Activated CD4-positive, alpha-beta memory T cell treated with anti-CD3 and anti-CD28 coated beads for 36 hours (primary cell): ENCODE measurements at regions of chr3 and their contacts with region 1.

Region 1: GRCh38 chr3:141412087-141412935 is 44.0 kb downstream of the ZBTB38 start:
- DNase-seq: peak; percentile 60
- H3K4me3 Mint-ChIP-seq: peak overlapping the region; percentile 70
- H3K27ac Mint-ChIP-seq: peak overlapping the region; percentile 92
- H3K4me1 Mint-ChIP-seq: peaks cover 87% of the 10 kb centered on the region
- H3K27me3 Mint-ChIP-seq: no peaks in the 10 kb centered on the region

Region 2: GRCh38 chr3:140910860-140911259 is 501.5 kb before region 1 on chr3:
- CTCF ChIA-PET with region 1: no interaction called
- POLR2A ChIA-PET with region 1: no interaction called
- intact Hi-C with region 1: no loop called
- DNase-seq: no peak
- H3K4me3 Mint-ChIP-seq: no peak overlapping the region
- H3K27ac Mint-ChIP-seq: no peak overlapping the region
- H3K4me1 Mint-ChIP-seq: no peaks in the 10 kb centered on the region
- H3K27me3 Mint-ChIP-seq: peaks cover 2% of the 10 kb centered on the region

Region 3: DNA sequence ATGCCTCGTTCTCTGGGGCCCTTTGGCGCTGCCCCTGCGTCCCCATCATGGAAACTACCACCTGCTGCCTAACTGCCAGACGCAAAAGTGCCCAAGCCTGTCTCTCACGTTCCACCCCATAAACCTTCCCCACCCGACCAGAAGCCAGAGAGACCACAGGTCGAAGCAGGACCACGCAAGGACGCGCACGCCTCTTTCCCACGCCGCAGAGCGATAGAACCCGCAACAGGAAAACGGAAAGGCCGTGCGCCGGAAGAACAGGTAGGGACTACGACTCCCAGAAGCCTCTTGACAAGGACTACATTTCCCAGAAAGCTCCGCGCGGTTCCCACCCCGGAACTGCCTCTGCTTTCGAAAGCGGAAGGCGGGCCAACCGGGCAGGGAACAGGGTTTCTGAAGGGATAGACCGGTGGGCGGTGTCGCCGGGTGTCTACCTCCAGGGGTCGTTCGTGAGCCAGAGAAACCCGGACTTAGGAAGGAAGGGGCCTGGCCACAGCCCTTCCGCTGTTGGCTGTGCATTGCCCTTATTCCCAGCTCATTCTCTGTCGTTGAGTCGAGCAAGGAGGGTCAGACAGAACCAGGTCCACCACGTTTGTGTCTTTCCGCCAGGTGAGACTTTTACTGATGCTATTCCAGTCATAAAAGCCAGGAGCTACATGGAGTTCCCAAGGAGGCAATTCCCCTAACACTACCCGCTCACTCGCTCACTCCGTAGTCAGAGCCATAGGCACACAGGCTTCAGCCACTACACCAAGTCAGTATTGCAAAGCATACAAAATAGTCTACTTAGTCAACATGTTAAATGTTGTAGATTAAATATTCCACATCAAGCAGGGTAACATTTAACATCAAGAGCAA is 100.6 kb before region 1 on chr3:
- CTCF ChIA-PET with region 1: interaction called, 10 read pairs
- POLR2A ChIA-PET with region 1: interaction called, 3 read pairs
- intact Hi-C with region 1: loop called (anchors 1 kb)
- DNase-seq: peak; percentile 100
- H3K4me3 Mint-ChIP-seq: peak overlapping the region; percentile 89
- H3K27ac Mint-ChIP-seq: peak overlapping the region; percentile 90
- H3K4me1 Mint-ChIP-seq: peaks cover 49% of the 10 kb centered on the region
- H3K27me3 Mint-ChIP-seq: no peaks in the 10 kb centered on the region

Region 4: GRCh38 chr3:141370065-141370533 is 42.2 kb before region 1 on chr3:
- CTCF ChIA-PET with region 1: interaction called, 5 read pairs
- POLR2A ChIA-PET with region 1: interaction called, 31 read pairs
- intact Hi-C with region 1: loop called (anchors 1 kb)
- DNase-seq: peak; percentile 68
- H3K4me3 Mint-ChIP-seq: no peak overlapping the region
- H3K27ac Mint-ChIP-seq: peak overlapping the region; percentile 40
- H3K4me1 Mint-ChIP-seq: peaks cover 58% of the 10 kb centered on the region
- H3K27me3 Mint-ChIP-seq: no peaks in the 10 kb centered on the region

Region 5: GRCh38 chr3:141426404-141427034 is 14.2 kb after region 1 on chr3:
- CTCF ChIA-PET with region 1: interaction called, 3 read pairs
- POLR2A ChIA-PET with region 1: no interaction called
- intact Hi-C with region 1: loop called (anchors 1 kb)
- DNase-seq: no peak
- H3K4me3 Mint-ChIP-seq: no peak overlapping the region
- H3K27ac Mint-ChIP-seq: no peak overlapping the region
- H3K4me1 Mint-ChIP-seq: peaks cover 33% of the 10 kb centered on the region
- H3K27me3 Mint-ChIP-seq: no peaks in the 10 kb centered on the region

Region 6: GRCh38 chr3:141690431-141691072 is 278.2 kb after region 1 on chr3:
- CTCF ChIA-PET with region 1: no interaction called
- POLR2A ChIA-PET with region 1: no interaction called
- intact Hi-C with region 1: no loop called
- DNase-seq: no peak
- H3K4me3 Mint-ChIP-seq: no peak overlapping the region
- H3K27ac Mint-ChIP-seq: no peak overlapping the region
- H3K4me1 Mint-ChIP-seq: peaks cover 9% of the 10 kb centered on the region
- H3K27me3 Mint-ChIP-seq: no peaks in the 10 kb centered on the region